SK-N-SH (cell line): ENCODE measurements at regions of chr9 and their contacts with region 1.

Region 1: GRCh38 chr9:34559624-34560452 is 29.7 kb downstream of the CNTFR start:
- DNase-seq: peak; percentile 79
- H3K4me3 ChIP-seq: no peak overlapping the region
- H3K27ac ChIP-seq: peak overlapping the region in 1 of 2 experiments; percentile 74; a peak in 2 of 4 replicates
- H3K4me1 ChIP-seq: peaks cover 0 to 73% of the 10 kb centered on the region in 2 experiments; a peak in 2 of 4 replicates
- H3K27me3 ChIP-seq: no peaks in the 10 kb centered on the region
- CTCF ChIP-seq: no peak
- EP300 ChIP-seq: no peak
- RAD21 ChIP-seq: no peak

Region 2: DNA sequence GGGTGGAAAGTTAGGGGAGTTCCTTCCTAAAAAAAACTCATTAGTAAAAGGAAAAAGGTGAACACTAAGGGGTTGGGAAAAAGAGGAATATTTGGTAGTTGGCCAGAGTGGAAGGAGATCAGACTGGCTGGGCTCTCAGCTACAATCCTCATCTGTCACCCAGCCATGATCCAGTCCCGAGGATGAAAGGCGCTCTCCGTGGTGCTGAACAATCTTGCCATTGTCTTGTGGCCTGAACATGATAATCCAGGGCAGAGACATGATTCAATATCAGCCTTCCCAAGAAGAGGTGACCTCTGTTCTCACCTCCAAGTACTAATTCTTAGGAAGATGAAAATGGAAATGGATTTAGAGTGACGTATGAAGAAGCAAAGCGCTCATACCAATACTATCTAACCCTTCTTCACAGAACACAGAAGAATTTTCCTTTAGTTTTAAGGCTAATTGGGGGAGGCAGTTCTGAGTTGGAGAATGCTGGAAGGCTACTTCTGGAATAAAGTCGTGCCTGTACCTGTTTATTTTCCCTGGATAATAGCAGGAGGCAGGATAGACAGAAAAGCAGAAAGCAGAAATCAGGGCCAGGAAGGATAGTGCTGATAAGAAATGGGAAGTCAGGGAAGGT is 146.5 kb before region 1 on chr9:
- CTCF ChIA-PET with region 1: no interaction called
- POLR2A ChIA-PET with region 1: no interaction called
- DNase-seq: no peak
- H3K4me3 ChIP-seq: no peak overlapping the region
- H3K27ac ChIP-seq: no peak overlapping the region
- H3K4me1 ChIP-seq: peaks cover 0 to 12% of the 10 kb centered on the region in 2 experiments; a peak in 1 of 4 replicates
- H3K27me3 ChIP-seq: no peaks in the 10 kb centered on the region
- CTCF ChIP-seq: no peak
- EP300 ChIP-seq: no peak
- RAD21 ChIP-seq: no peak

Region 3: GRCh38 chr9:34536685-34537084 is 23.2 kb before region 1 on chr9:
- CTCF ChIA-PET with region 1: no interaction called
- POLR2A ChIA-PET with region 1: no interaction called
- DNase-seq: no peak
- H3K4me3 ChIP-seq: no peak overlapping the region
- H3K27ac ChIP-seq: no peak overlapping the region
- H3K4me1 ChIP-seq: peaks cover 0 to 6% of the 10 kb centered on the region in 2 experiments; a peak in 1 of 4 replicates
- H3K27me3 ChIP-seq: peaks cover 16% of the 10 kb centered on the region
- CTCF ChIP-seq: no peak
- EP300 ChIP-seq: no peak
- RAD21 ChIP-seq: no peak

Region 4: GRCh38 chr9:34578241-34579103 is 18.6 kb after region 1 on chr9:
- CTCF ChIA-PET with region 1: interaction called, 8 read pairs
- POLR2A ChIA-PET with region 1: interaction called, 10 read pairs
- DNase-seq: peak; percentile 85
- H3K4me3 ChIP-seq: peak overlapping the region; percentile 26 to 35; a peak in 3 of 4 replicates
- H3K27ac ChIP-seq: peak overlapping the region in 1 of 2 experiments; percentile 75; a peak in 2 of 4 replicates
- H3K4me1 ChIP-seq: peaks cover 0 to 86% of the 10 kb centered on the region in 2 experiments; a peak in 2 of 4 replicates
- H3K27me3 ChIP-seq: peaks cover 33% of the 10 kb centered on the region
- CTCF ChIP-seq: no peak
- EP300 ChIP-seq: no peak
- RAD21 ChIP-seq: no peak

Region 5: DNA sequence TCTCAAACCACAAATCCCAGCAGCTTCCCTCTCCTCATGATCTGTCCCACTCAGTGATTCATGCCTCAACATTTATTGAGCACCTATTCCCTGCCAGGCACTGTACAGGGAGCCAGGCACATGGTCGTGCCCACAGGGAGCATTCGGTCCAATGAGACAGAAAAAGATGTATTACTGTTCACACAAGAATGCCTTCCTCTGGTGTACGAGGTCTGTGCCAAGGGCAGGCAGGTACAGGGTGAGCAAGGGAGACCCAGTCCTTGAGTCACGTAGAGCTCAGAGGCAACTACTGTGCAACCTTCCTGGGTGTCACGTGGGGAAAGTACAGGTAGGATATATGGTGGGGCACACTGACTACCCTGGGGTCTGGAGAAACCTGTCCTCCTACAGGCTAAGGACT is 25.1 kb after region 1 on chr9:
- CTCF ChIA-PET with region 1: interaction called, 507 read pairs
- POLR2A ChIA-PET with region 1: interaction called, 10 read pairs
- DNase-seq: no peak
- H3K4me3 ChIP-seq: no peak overlapping the region
- H3K27ac ChIP-seq: no peak overlapping the region; a peak in 1 of 4 replicates
- H3K4me1 ChIP-seq: peaks cover 0 to 79% of the 10 kb centered on the region in 2 experiments; a peak in 2 of 4 replicates
- H3K27me3 ChIP-seq: peaks cover 57% of the 10 kb centered on the region
- CTCF ChIP-seq: no peak
- EP300 ChIP-seq: no peak
- RAD21 ChIP-seq: no peak

Region 6: DNA sequence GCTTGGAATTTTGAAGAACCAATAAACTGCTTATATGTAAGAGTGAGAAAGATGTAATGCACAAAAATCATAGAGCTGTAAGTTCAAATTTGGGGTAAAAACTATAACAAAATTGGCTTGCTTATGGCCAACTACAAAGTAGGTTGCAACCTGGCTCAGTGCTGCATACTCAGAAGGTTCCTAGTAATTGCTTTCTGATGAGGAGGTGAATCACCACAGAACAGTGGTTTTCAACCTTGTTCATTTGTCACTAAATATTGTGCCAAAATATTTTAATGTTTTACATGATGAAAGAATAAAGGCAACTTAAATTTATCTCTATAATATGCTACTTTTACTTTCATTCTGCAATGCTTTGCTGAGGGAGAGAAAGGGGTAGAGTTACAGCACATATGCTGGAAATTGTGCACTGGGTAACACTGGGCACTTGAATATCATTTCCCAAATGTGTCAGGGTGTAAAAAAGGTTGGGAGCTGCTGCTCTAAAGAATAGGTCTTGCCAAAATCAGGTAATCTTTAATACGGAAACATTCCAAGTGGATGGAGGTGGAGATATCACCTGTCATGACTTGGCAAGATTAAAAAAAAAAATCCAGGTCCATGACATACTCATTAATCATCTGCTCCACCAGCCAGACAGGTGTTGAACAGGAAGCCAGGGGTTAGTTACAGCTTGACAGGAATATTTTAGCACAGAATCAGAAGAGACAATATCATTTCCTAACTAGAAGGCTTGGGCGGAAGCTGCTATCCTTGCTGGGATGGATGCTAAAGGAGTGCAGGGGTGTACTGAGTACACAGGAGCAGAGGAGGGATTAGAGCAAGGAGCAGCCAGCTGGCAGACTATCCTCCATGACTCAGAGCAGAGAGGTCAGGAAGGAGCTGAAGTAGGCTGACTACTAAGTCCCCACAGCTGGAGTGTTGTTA is 184.7 kb after region 1 on chr9:
- CTCF ChIA-PET with region 1: no interaction called
- POLR2A ChIA-PET with region 1: no interaction called
- DNase-seq: no peak
- H3K4me3 ChIP-seq: no peak overlapping the region
- H3K27ac ChIP-seq: no peak overlapping the region
- H3K4me1 ChIP-seq: no peaks in the 10 kb centered on the region
- H3K27me3 ChIP-seq: no peaks in the 10 kb centered on the region
- CTCF ChIP-seq: no peak
- EP300 ChIP-seq: no peak
- RAD21 ChIP-seq: no peak